PC-3 (cell line): ENCODE measurements at regions of chr3 and their contacts with region 1.

Region 1: DNA sequence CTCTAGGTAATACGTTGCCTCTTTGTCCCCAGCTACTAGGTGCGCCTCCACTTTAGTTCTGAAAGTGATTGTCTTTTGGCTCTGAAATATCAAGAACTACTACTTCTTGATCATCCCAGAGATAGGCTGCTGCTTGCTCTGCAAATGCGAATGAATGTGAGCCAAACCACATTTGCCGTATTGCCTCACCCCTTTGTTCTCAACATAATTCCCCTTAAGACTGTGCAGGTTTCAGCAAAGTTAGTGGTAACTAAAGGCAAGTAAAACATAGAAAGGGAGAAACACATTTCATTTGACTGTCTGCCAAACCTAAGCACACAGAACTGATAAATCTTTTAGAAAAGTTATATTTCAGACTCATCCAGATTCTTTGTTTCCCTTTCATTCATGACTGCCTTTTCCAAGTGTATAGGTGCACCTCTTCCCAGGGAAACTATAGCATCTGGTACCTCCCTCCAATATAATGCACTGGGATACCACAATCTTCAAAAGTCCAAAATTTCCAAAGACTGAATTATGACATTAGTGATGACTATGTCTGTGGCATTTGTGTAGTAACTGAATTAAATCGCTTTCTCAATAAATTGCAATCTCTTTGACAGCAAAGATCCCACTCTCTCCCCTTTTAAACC is 720.6 kb upstream of the CBLB start:
- DNase-seq: no peak
- ATAC-seq: no peak
- H3K4me3 ChIP-seq: no peak overlapping the region
- H3K27ac ChIP-seq: no peak overlapping the region
- H3K4me1 ChIP-seq: no peaks in the 10 kb centered on the region
- H3K27me3 ChIP-seq: no peaks in the 10 kb centered on the region
- CTCF ChIP-seq: no peak

Region 2: GRCh38 chr3:106381939-106382335 is 207.5 kb before region 1 on chr3:
- CTCF ChIA-PET with region 1: no interaction called
- POLR2A ChIA-PET with region 1: no interaction called
- intact Hi-C with region 1: loop called (anchors 10 kb)
- DNase-seq: no peak
- ATAC-seq: no peak
- H3K4me3 ChIP-seq: no peak overlapping the region
- H3K27ac ChIP-seq: no peak overlapping the region
- H3K4me1 ChIP-seq: 0 out of 2 replicates have a peak, but pooled peaks cover 7% of the 10 kb centered on the region
- H3K27me3 ChIP-seq: no peaks in the 10 kb centered on the region
- CTCF ChIP-seq: no peak

Region 3: DNA sequence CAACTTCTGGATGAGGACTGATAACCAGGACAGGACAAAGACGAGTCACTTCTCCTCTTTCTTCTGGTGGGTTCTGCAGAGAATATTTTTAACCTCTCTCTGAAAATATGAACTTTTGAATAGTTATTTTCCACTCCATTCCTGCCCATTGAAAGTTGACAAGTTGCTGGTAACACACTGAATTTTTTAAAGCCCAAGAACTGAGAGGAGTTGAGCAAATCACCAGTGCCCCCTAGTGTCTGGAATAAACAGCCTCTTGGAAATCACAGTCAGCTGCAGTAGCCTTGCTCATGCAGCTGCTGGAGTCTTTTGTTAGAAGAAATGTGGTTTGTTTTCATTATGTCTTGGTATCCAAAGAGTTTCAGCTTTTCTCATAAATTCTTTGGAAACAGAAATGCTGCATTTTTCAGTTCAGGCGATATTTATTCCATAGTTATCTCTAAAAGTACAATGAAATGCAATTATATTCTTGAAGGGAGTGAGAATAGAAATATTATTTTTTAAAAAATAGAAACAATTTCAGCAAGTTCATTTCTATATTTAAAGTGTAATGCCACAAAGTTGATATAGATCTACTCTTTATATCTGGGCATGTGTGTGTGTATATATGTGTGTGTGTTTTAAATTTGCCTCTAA is 20.4 kb after region 1 on chr3:
- CTCF ChIA-PET with region 1: no interaction called
- POLR2A ChIA-PET with region 1: no interaction called
- intact Hi-C with region 1: no loop called
- DNase-seq: peak; percentile 89
- ATAC-seq: peak; percentile 80
- H3K4me3 ChIP-seq: no peak overlapping the region
- H3K27ac ChIP-seq: no peak overlapping the region
- H3K4me1 ChIP-seq: peaks cover 31% of the 10 kb centered on the region
- H3K27me3 ChIP-seq: no peaks in the 10 kb centered on the region
- CTCF ChIP-seq: peak; percentile 96